ENCODE measurements at regions of chr2 and their contacts with region 1.

Region 1: DNA sequence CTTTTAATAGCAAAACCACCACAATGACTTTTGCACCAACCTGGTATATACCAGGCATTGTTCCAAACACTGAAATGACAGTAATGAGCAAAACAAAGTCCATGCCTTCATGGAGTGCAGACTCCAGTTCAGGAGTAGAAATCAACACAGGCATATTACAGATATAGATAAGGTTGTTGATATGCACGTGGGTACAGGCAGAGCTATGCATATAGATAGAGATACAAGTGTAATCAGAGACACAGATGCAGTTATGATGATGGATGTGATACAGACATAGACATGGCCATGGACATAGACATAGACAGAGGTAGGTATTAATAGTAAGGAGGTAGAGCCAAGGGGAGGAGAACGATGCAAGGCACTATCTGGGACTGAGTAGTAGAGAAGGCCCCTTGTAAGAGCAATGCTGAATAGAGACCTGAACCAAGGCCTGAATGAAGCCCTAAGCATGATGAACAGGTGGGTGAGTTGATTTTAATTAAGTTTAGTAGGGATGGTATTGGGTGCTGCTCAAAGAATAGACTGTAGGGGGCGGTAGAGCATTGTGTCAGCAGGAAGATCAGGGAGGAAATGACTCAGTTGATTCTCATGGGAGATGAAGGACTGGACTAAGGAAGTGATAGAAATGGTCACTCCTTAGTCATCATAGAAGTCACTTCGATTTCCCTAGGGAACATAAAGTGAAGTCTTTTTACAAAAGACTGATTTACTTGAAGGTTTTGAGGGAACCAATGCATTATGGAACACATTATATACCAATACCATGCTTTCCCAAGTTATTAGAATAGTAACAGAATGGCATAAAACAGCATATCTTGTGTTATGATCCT is 39.4 kb downstream of the CMPK2 start:
- DNase-seq: peak in 1 of 2 experiments; percentile 11
- H3K4me3 ChIP-seq: no peak overlapping the region
- H3K4me3 Mint-ChIP-seq: no peak overlapping the region
- H3K27ac Mint-ChIP-seq: no peak overlapping the region
- H3K4me1 ChIP-seq: no peaks in the 10 kb centered on the region
- H3K4me1 Mint-ChIP-seq: no peaks in the 10 kb centered on the region
- H3K27me3 ChIP-seq: no peaks in the 10 kb centered on the region
- H3K27me3 Mint-ChIP-seq: no peaks in the 10 kb centered on the region
- CTCF ChIP-seq: peak; percentile 19 to 30

Region 2: DNA sequence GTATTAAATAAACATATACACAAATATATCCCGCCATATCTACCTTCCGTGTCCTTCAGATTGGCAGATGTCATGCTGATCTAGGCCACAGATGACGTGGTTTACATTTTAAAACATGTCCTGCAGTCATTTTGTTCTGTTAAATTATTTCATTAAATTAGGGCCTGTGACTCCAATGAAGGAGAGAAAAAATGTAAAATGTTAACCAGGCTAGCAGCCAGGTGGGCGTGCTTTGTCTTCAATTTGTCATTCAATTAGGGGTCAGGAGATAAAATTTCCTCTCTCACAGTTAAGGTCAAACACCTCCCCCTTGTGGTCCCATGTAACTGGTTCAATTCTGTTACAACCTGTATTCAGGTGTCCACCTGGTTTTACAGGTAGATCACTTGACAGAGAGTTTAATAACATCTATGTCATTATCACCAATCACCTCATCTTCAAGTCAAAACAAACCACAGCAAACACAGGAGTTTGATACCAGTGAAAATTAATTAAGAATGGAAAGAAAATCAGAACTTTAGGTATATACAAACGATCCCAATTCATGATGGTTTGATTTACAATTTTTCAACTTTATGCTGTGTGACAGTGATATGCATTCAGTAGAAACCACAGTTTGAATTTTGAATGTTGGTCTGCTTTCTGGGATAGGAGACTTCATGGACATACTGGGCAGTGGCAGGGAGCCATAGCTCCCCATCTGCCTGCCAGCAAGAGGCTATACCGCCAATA is 300.0 kb before region 1 on chr2:
- CTCF ChIA-PET with region 1: no interaction called
- POLR2A ChIA-PET with region 1: no interaction called
- intact Hi-C with region 1: no loop called
- DNase-seq: peak in 1 of 2 experiments; percentile 42
- H3K4me3 ChIP-seq: no peak overlapping the region
- H3K4me3 Mint-ChIP-seq: no peak overlapping the region
- H3K27ac Mint-ChIP-seq: no peak overlapping the region
- H3K4me1 ChIP-seq: no peaks in the 10 kb centered on the region
- H3K4me1 Mint-ChIP-seq: no peaks in the 10 kb centered on the region
- H3K27me3 ChIP-seq: no peaks in the 10 kb centered on the region
- H3K27me3 Mint-ChIP-seq: peaks cover 2% of the 10 kb centered on the region
- CTCF ChIP-seq: peak; percentile 29 to 36

Region 3: GRCh38 chr2:6626401-6627012 is 199.8 kb before region 1 on chr2:
- CTCF ChIA-PET with region 1: no interaction called
- POLR2A ChIA-PET with region 1: no interaction called
- intact Hi-C with region 1: no loop called
- DNase-seq: no peak
- H3K4me3 ChIP-seq: no peak overlapping the region
- H3K4me3 Mint-ChIP-seq: no peak overlapping the region
- H3K27ac Mint-ChIP-seq: no peak overlapping the region
- H3K4me1 ChIP-seq: no peaks in the 10 kb centered on the region
- H3K4me1 Mint-ChIP-seq: no peaks in the 10 kb centered on the region
- H3K27me3 ChIP-seq: no peaks in the 10 kb centered on the region
- H3K27me3 Mint-ChIP-seq: peaks cover 7% of the 10 kb centered on the region
- CTCF ChIP-seq: no peak

Region 4: DNA sequence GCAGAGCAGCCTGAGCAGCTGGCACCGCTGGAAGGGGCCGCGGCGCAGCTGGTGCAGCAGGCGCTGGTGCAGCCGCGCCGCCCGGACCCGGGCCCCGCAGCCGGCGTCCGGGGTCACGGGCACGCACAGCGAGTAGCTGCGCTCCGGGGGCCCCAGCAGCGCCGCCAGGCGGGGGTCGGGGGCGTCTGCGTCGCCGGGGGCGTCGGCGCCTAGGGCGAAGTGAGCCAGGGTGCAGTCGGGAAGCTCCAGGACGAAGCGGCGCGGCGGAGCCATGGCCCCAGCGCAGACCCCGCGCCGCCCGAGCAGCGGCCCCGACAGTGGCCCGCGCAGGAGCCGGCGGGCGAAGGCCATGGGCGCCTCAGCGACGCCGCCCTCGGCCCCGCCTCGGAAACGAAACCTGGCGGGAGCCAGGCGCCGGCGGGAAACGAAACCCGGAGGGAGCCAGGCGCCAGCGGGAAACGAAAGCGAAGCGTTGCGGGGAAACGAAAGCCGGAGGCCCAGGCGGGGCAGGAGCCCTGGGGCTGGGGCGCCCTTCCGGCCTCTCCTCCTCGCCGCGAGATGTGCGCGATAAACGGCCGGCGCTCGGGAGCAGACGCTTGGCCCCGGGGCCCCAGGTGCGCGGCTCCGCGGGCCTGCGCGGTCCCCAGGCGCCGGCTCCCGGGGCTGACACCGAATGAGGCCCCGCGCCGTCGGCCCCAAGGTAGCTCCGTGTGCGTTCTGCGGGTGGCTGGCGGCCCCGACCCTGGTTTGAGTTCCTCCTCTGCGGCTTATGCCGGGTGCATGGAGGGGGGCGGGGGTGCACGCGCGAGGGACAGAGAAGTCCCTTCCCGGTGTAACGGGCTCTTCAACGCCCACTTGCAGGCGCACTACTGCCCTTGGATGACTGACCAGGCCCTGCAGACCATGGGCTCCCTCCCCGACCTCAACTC is 39.3 kb after region 1 on chr2 and contains the start of gene CMPK2:
- CTCF ChIA-PET with region 1: no interaction called
- POLR2A ChIA-PET with region 1: no interaction called
- intact Hi-C with region 1: loop called (anchors 1 kb)
- DNase-seq: peak; percentile 47 to 48
- H3K4me3 ChIP-seq: peak within 1 kb of the TSS; percentile 61
- H3K4me3 Mint-ChIP-seq: peak within 1 kb of the TSS; percentile 81
- H3K27ac Mint-ChIP-seq: peak within 1 kb of the TSS; percentile 50
- H3K4me1 ChIP-seq: peaks cover 5% of the 10 kb centered on the region; the same call in 1 of the 2 replicates
- H3K4me1 Mint-ChIP-seq: peaks cover 6% of the 10 kb centered on the region
- H3K27me3 ChIP-seq: no peaks in the 10 kb centered on the region; the same call in 1 of the 2 replicates
- H3K27me3 Mint-ChIP-seq: peaks cover 14% of the 10 kb centered on the region
- CTCF ChIP-seq: no peak
- total RNA-seq, gene CMPK2: 0.52 and 0.53 TPM in 2 replicates

Region 5: GRCh38 chr2:7044261-7045250 is 218.3 kb after region 1 on chr2:
- CTCF ChIA-PET with region 1: no interaction called
- POLR2A ChIA-PET with region 1: no interaction called
- intact Hi-C with region 1: loop called (anchors 1 kb)
- DNase-seq: peak in 1 of 2 experiments; percentile 51
- H3K4me3 ChIP-seq: no peak overlapping the region
- H3K4me3 Mint-ChIP-seq: no peak overlapping the region
- H3K27ac Mint-ChIP-seq: no peak overlapping the region
- H3K4me1 ChIP-seq: no peaks in the 10 kb centered on the region
- H3K4me1 Mint-ChIP-seq: no peaks in the 10 kb centered on the region
- H3K27me3 ChIP-seq: no peaks in the 10 kb centered on the region
- H3K27me3 Mint-ChIP-seq: peaks cover 4% of the 10 kb centered on the region
- CTCF ChIP-seq: peak; percentile 83 to 91